Dendritic cell treated with granulocyte-macrophage colony-stimulating factor and Interleukin-4, amounts not matched to agents 40 ng/mL and 50 ng/mL, for 4 days (primary cell): ENCODE measurements at regions of chr7 and their contacts with region 1.

Region 1: GRCh38 chr7:28835800-28836199 is 122.3 kb downstream of the TRIL start:
- H3K4me3 Mint-ChIP-seq: no peak overlapping the region
- H3K27ac Mint-ChIP-seq: no peak overlapping the region
- H3K4me1 Mint-ChIP-seq: peaks cover 9% of the 10 kb centered on the region
- H3K27me3 Mint-ChIP-seq: peaks cover 9% of the 10 kb centered on the region

Region 2: DNA sequence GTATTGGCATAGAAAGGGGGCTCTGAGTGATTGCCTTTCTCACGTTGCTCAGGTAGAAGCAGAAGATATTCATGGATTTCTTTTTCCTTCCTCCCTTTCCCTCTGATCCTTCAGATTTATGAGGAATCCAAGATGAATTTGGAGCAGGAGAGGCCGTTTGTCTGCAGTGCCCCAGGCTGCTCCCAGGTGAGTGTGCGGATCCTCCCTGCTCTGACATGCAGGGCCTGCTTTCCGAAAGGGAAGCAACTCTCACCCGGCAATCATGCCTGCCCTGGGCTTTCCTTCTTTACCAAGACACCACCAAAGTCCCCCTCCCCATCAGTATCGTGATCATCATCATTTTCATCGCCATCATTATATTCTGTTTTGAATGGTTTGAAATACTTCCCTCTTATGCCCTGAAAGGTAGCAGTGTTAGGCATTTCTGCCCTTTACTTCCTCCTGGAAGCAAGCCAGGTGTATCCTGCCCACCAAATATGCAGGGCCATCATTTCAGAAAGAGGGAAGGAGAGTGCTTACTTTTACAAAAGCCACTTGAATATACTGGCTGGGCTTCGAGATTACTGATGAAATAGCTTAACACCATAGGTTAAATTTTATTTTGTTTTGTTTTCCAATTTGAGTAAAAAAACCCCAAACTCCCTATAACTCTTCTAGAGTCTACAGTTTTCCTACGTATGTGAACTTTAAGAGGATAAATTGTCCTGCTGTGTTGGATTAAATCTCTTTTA is 347.6 kb before region 1 on chr7:
- intact Hi-C with region 1: no loop called
- H3K4me3 Mint-ChIP-seq: no peak overlapping the region
- H3K27ac Mint-ChIP-seq: no peak overlapping the region
- H3K4me1 Mint-ChIP-seq: peaks cover 28% of the 10 kb centered on the region
- H3K27me3 Mint-ChIP-seq: peaks cover 10% of the 10 kb centered on the region

Region 3: DNA sequence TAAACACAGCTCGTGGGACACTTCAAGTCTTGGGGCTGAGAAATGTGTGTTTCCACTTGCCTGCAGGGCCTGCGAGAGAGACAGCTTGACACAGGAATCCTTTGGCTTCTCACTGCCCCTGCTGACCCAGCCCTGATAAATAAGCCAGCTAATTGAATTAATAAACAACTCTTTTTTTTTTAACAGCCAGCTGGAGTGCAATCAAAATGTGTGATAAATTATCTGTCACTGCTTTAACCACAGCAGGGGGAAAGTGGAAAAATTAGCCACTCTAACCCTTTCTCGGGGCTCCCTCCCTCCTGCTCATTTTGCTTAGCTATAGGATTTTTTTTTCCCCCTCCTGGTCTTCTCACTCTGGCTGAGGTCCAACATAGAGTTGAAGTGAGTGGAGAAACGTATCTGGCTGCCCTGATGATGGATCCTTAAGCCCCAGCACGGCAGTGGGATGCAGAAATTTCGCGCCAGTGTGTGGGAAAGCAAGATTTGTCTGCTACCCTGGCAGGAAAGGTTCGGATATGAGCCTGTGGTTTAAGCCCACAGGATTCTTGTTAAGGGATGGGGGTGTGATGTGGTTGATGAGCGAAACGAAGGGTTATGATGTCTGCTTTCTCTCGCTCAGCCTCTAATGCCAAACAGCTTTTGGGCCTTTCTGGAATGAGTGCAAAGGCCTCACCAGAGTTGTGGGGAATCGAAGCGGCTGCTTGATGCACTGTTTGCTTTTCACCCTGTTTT is 51.5 kb before region 1 on chr7:
- intact Hi-C with region 1: loop called (anchors 10 kb)
- H3K4me3 Mint-ChIP-seq: no peak overlapping the region
- H3K27ac Mint-ChIP-seq: peak overlapping the region; percentile 70
- H3K4me1 Mint-ChIP-seq: peaks cover 84% of the 10 kb centered on the region
- H3K27me3 Mint-ChIP-seq: no peaks in the 10 kb centered on the region